A673 (cell line): ENCODE measurements at regions of chr21 and their contacts with region 1.

Region 1: DNA sequence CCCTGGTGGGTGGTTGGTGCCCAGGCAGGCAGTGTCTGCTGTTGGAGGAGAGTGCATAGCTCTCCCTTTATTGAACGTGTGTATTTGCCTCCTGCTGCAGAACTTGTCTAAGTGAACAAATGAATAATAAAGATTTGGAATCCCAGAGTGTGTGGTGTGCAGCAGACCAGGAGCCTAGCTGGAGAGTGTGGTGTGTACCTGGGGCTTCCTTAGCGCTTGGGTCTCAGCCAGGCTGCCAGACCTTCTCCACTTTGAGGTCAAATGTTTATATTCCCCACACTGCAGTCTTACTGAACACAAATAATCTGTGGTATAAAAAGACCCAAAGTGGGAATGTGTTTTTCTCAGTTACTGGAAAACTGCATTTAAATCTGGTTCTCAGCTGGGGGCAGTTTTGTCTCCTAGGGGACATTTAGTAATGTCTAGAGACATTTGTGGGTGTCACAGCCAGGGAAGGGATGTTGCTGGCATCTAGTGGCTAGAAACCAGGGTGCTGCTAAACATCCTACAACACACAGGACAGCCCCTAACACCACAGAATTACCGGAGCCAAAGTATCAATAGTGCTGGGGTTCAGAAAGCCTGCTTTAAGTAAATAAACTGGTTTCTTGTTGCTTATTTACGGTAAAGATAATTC is 23.6 kb downstream of the SLC37A1 start:
- DNase-seq: peak; percentile 53
- H3K4me3 ChIP-seq: no peak overlapping the region
- H3K27ac ChIP-seq: no peak overlapping the region
- H3K4me1 ChIP-seq: peaks cover 29% of the 10 kb centered on the region
- H3K27me3 ChIP-seq: no peaks in the 10 kb centered on the region
- CTCF ChIP-seq: peak; percentile 58

Region 2: DNA sequence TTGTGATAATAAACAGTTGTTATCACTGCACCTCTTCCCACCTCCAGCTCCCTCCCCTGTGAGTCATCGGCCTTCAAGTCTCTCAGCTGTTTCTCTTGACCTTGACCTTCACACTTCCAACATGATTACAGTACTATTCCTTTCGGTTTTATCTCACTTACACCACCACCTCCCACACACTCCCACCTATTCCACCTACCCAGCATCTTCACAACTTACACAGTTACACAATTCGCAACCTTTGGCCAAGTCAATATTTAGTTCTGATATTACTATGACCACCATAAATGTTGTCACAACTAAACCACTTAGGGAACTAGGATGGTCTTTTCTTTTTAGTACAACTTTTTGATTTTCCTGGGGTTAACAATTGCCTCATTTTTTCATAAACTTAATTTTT is 830.5 kb before region 1 on chr21:
- CTCF ChIA-PET with region 1: no interaction called
- POLR2A ChIA-PET with region 1: no interaction called
- intact Hi-C with region 1: no loop called
- DNase-seq: no peak
- H3K4me3 ChIP-seq: no peak overlapping the region
- H3K27ac ChIP-seq: no peak overlapping the region
- H3K4me1 ChIP-seq: no peaks in the 10 kb centered on the region
- H3K27me3 ChIP-seq: no peaks in the 10 kb centered on the region
- CTCF ChIP-seq: no peak

Region 3: DNA sequence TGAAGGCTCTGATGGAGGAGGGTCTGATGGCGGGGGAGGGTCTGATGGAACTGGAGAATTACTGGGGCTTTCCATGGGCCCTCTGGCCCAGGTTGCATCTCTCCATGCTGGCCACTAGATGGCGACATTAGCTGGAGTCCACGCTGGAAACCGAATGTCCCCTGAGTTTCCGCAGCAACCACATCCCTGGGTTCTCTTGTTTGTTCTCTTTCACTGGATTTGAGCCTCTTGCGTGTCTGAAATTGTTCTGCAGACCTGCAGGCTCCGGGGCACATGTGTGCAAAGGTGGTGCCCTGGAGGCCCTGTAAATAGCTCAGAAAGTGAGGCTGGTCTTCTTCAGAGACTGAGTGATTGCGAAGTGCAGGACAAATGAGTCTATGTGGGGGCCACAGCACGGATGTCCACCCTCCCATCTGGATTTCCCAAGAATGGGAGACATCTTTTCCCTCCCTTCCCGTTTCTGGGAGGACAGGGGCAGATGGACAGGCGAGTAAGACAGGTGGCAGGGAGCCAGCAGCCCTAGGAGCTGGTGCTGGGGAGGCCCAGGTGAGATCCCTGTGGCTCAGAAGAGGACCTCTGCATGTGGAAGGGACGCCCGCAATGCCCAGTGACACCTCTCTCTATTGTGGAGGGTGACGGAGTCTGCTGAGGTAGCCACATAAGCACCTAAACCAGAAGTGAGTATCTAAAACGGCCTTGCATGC is 391.5 kb before region 1 on chr21:
- CTCF ChIA-PET with region 1: no interaction called
- POLR2A ChIA-PET with region 1: no interaction called
- intact Hi-C with region 1: loop called (anchors 1 kb)
- DNase-seq: peak; percentile 70
- H3K4me3 ChIP-seq: no peak overlapping the region
- H3K27ac ChIP-seq: no peak overlapping the region
- H3K4me1 ChIP-seq: no peaks in the 10 kb centered on the region
- H3K27me3 ChIP-seq: no peaks in the 10 kb centered on the region
- CTCF ChIP-seq: peak; percentile 89

Region 4: GRCh38 chr21:42309753-42310221 is 227.4 kb before region 1 on chr21:
- CTCF ChIA-PET with region 1: interaction called, 3 read pairs
- POLR2A ChIA-PET with region 1: no interaction called
- intact Hi-C with region 1: loop called (anchors 5 kb)
- DNase-seq: peak; percentile 61
- H3K4me3 ChIP-seq: peak overlapping the region; percentile 22
- H3K27ac ChIP-seq: no peak overlapping the region
- H3K4me1 ChIP-seq: no peaks in the 10 kb centered on the region
- H3K27me3 ChIP-seq: no peaks in the 10 kb centered on the region
- CTCF ChIP-seq: peak; percentile 94

Region 5: GRCh38 chr21:42449296-42449927 is 87.8 kb before region 1 on chr21:
- CTCF ChIA-PET with region 1: no interaction called
- POLR2A ChIA-PET with region 1: no interaction called
- intact Hi-C with region 1: loop called (anchors 2 kb)
- DNase-seq: no peak
- H3K4me3 ChIP-seq: no peak overlapping the region
- H3K27ac ChIP-seq: no peak overlapping the region
- H3K4me1 ChIP-seq: peaks cover 6% of the 10 kb centered on the region
- H3K27me3 ChIP-seq: no peaks in the 10 kb centered on the region
- CTCF ChIP-seq: no peak

Region 6: DNA sequence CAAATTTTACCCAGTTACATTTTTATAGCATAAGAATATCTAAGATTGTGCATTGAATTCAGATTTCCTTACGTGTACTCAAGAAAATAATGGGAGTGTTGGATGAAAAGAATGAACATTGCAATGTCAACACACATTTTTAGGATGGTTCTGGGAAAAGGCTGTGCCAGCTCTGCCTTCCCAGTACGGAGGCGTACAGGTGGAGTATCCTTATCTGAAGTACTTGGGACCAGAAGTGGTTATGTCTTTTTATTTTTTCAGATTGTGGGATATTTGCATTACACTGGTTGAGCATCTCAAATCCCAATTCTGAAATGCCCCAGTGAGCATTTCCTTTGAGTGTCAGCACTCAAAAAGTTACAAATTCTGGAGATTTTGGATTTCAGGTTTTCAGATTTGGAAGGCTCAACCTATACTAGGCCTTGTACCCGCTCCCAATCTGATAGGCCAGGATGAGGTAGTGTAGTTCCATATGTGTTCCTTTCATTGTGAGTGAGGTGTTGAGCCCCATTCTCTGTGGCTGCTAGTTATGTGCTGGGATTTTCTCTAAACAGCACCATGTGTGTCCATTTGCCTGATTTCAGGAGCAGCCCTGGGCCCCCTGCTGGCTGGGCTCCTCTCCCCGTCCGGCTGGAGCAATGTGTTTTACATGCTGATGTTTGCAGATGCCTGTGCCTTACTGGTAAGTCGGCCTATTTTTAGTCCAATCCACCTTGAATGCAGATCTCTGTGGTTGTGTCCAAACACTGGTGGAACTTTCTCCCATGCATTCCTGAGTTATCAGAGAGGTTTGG is 37.2 kb after region 1 on chr21:
- CTCF ChIA-PET with region 1: no interaction called
- POLR2A ChIA-PET with region 1: no interaction called
- intact Hi-C with region 1: loop called (anchors 5 kb)
- DNase-seq: no peak
- H3K4me3 ChIP-seq: no peak overlapping the region
- H3K27ac ChIP-seq: no peak overlapping the region
- H3K4me1 ChIP-seq: no peaks in the 10 kb centered on the region
- H3K27me3 ChIP-seq: no peaks in the 10 kb centered on the region
- CTCF ChIP-seq: no peak